Heart right ventricle (tissue), 16 donors: ENCODE measurements at regions of chr17 and their contacts with region 1.

Region 1: GRCh38 chr17:8118769-8119580 is 661 bp upstream of the ALOXE3 start:
- DNase-seq: peak; percentile 89 to 91
- ATAC-seq: peak; percentile 75 to 89 (median 86)
- H3K4me3 ChIP-seq: peak overlapping the region; percentile 36 to 91 (median 64)
- H3K27ac ChIP-seq: peak overlapping the region; percentile 33 to 85 (median 71)
- H3K4me1 ChIP-seq: peaks cover 22 to 69% (median 55%) of the 10 kb centered on the region in 9 donors
- H3K27me3 ChIP-seq: peaks cover 0 to 78% (median 42%) of the 10 kb centered on the region in 7 donors
- CTCF ChIP-seq: peak; percentile 74 to 97 (median 89)

Region 2: GRCh38 chr17:8091033-8091687 is 27.8 kb before region 1 on chr17:
- intact Hi-C with region 1: loop called in 1 of 10 experiments (anchors 2 kb)
- DNase-seq: no peak
- ATAC-seq: no peak
- H3K4me3 ChIP-seq: no peak overlapping the region
- H3K27ac ChIP-seq: no peak overlapping the region
- H3K4me1 ChIP-seq: no peaks in the 10 kb centered on the region
- H3K27me3 ChIP-seq: peaks cover 0 to 79% (median 48%) of the 10 kb centered on the region in 7 donors
- CTCF ChIP-seq: no peak

Region 3: DNA sequence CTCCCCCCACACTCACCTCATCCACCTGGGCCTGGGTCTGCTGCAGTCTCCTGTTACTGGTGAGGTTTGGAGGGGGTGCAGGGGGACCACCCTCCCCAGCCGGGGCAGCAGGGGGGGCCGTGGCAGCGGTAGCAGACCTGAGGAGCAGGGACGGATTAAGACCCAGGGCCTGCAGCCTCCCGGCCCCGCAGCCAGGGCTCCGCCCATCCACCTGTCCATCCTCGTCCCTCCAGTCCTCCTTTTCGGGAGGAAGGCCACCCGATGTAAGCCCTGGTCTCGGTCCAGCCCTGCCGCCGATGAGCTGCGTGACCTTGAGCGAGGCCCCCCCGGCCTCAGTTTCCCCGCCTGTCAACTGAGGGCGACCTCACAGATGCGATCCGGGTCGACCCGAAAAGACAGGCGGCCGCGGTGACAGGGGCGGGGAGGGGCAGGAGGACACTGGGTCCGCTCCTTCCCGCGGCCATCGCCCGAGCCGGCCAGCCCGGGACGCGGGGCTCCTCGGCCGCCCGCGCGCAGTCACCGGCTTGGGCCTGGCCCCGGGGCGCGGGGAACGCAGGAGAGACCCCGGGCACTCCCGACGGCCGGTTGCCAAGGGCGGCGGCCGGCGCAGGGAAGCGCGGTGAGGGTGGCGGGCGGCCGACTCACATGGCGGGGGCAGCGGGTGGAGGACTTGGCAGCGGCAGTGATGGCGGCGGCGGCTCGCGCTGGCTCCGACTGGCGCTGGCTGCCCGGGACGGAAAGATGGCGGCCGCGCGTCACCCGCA is 43.4 kb after region 1 on chr17 and contains the start of gene VAMP2:
- intact Hi-C with region 1: loop called in 3 of 10 experiments (anchors 5 kb)
- DNase-seq: peak; percentile 81 to 86
- ATAC-seq: peak; percentile 20 to 79 (median 58)
- H3K4me3 ChIP-seq: peak within 1 kb of the TSS; percentile 80 to 100 (median 99)
- H3K27ac ChIP-seq: peak within 1 kb of the TSS; percentile 97 to 100 (median 100)
- H3K4me1 ChIP-seq: peaks cover 25 to 71% (median 57%) of the 10 kb centered on the region in 9 donors
- H3K27me3 ChIP-seq: no peaks in the 10 kb centered on the region
- CTCF ChIP-seq: peak in 1 of 9 donors; percentile 23
- total RNA-seq, gene VAMP2: 46.8 to 67.8 (median 62.7) TPM

Region 4: GRCh38 chr17:8222630-8223356 is 103.8 kb after region 1 on chr17:
- intact Hi-C with region 1: loop called in 4 of 10 experiments (anchors 1 to 10 kb)
- DNase-seq: peak; percentile 95
- ATAC-seq: peak; percentile 72 to 85 (median 79)
- H3K4me3 ChIP-seq: peak overlapping the region; percentile 45 to 92 (median 66)
- H3K27ac ChIP-seq: peak overlapping the region; percentile 94 to 99 (median 97)
- H3K4me1 ChIP-seq: peaks cover 7 to 68% (median 18%) of the 10 kb centered on the region in 9 donors
- H3K27me3 ChIP-seq: no peaks in the 10 kb centered on the region
- CTCF ChIP-seq: no peak